Posterior vena cava (tissue), 2 donors: ENCODE measurements at regions of chr17 and their contacts with region 1.

Region 1: GRCh38 chr17:78421484-78422266 is 43.2 kb downstream of the PGS1 start:
- DNase-seq: peak; percentile 93

Region 2: GRCh38 chr17:78128551-78129350 is 292.9 kb before region 1 on chr17 and contains the start of gene TMC6:
- intact Hi-C with region 1: loop called in 1 of 2 experiments (anchors 10 kb)
- DNase-seq: no peak
- total RNA-seq, gene TMC6: 35.6 to 37.4 TPM

Region 3: GRCh38 chr17:78250891-78251794 is 170.5 kb before region 1 on chr17:
- intact Hi-C with region 1: loop called in 1 of 2 experiments (anchors 5 kb)
- DNase-seq: peak; percentile 96

Region 4: DNA sequence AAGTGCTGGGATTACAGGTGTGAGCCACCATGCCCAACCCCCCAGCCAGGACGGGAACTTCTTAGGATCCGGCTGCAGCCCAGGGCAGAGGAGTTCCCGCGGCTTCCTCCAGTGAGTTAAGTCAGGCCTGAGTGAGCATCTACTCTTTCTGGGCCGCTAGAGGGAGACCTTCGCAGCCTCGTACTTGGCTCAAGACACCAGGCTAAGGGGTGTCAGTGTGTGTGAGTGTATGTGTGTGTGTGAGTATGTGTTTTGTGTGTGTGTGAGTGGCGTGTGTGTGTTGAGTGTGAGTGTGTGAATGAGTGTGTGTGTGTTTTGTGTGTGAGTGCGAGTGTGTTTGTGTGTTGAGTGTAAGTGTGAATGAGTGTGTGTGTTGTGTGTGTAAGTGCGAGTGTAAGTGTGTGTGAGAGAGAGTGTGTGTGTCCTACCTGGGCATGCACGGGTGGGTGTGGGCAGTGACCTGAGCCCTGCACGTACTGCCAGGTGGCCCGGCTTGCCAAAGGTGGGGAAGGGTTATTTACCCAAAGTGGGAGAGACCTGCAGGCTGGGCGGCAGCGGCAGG is 131.8 kb before region 1 on chr17:
- intact Hi-C with region 1: loop called (anchors 1 to 5 kb)
- DNase-seq: peak; percentile 93

Region 5: DNA sequence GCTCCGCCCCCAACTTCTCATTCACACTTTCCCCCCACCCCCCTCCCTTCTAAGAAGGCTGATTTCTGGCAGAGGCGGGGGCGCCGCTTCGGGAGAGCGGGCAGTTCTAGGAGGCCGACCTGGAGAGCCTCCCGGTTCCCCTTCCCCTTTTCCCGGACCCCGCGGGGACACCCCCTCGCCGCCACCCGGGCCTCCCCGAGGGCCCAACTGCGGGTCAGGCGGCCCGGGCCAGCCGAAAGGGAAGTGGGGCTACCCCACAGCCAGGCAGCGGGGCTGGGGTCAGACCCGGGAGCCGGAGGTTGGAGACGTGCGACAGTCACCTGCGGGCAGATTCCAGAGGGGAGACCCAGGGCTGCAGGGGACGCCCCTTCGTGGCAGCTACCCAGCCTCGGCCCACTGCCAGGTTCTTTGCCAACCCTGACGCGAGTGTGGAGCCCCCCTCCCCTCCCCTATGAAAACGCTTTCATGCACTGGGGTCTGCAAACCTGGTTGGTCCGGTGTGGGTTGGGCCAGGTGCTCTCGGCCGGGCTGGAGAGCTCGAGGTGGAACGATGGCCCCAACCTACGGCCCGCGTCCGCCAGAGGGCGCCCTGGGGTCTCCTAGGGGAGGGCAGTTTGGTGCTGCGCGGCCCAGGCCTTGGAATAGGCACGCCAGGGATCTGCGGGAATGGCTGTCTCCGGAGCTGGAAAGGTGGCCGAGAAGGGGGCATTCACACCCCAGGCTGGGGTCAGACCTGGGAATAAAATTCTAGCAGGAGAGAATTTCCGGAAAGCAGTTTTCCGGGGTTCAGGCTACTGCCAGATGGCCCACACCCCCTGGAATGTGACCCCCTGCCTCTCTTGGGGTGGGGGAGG is 61.1 kb before region 1 on chr17:
- intact Hi-C with region 1: loop called in 1 of 2 experiments (anchors 5 kb)
- DNase-seq: peak; percentile 98